ENCODE measurements at regions of chr13 and their contacts with region 1.

Region 1: GRCh38 chr13:108155185-108156106 is 59.9 kb downstream of the LIG4 start:
- DNase-seq: peak; percentile 64
- H3K4me3 Mint-ChIP-seq: no peak overlapping the region
- H3K27ac Mint-ChIP-seq: no peak overlapping the region
- H3K4me1 Mint-ChIP-seq: no peaks in the 10 kb centered on the region
- H3K27me3 Mint-ChIP-seq: peaks cover 10% of the 10 kb centered on the region

Region 2: DNA sequence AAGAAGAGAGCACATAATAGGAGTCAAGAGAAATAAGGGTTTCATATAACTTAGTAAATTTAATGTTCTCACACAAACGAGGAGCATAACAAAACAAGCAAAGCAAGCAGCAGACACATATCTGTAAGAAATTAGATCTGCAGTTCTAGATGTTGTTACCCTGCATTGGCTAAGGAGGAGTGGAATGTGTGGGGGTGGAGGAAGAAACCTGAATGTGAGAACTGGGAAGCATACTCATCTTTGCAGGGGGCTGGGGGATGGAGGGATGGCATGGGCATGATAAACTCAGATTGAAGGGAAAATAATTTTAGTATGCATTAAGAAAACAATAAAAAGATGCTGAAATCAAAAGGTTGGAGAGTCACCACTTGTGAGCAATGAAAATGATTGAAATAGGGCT is 195.1 kb before region 1 on chr13:
- CTCF ChIA-PET with region 1: no interaction called
- POLR2A ChIA-PET with region 1: no interaction called
- intact Hi-C with region 1: no loop called
- DNase-seq: no peak
- H3K4me3 Mint-ChIP-seq: no peak overlapping the region
- H3K27ac Mint-ChIP-seq: no peak overlapping the region
- H3K4me1 Mint-ChIP-seq: no peaks in the 10 kb centered on the region
- H3K27me3 Mint-ChIP-seq: no peaks in the 10 kb centered on the region

Region 3: DNA sequence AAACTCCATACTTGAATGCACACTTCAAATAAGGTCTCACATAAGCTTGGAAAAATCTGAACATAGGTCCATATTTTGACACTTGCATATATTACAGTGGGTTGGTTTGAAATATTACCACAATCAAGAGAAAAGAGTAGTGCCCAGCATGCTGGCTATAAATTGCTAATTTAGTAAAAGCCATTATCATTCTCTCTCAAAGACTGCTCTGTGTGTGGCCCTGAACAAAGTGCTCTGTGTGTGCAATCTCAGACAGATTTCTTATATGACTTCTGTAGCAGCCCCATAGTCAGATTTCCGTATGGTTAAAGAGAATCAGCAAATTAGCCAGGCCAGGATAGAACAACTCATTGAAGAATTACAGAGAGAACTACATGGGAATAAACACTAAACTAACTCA is 18.3 kb before region 1 on chr13:
- CTCF ChIA-PET with region 1: interaction called, 14 read pairs
- POLR2A ChIA-PET with region 1: no interaction called
- intact Hi-C with region 1: no loop called
- DNase-seq: no peak
- H3K4me3 Mint-ChIP-seq: no peak overlapping the region
- H3K27ac Mint-ChIP-seq: no peak overlapping the region
- H3K4me1 Mint-ChIP-seq: no peaks in the 10 kb centered on the region
- H3K27me3 Mint-ChIP-seq: peaks cover 9% of the 10 kb centered on the region

Measured in activated CD4-positive, alpha-beta memory T cell treated with anti-CD3 and anti-CD28 coated beads for 36 hours (primary cell).